ENCODE measurements at regions of chr14 and their contacts with region 1.

Region 1: DNA sequence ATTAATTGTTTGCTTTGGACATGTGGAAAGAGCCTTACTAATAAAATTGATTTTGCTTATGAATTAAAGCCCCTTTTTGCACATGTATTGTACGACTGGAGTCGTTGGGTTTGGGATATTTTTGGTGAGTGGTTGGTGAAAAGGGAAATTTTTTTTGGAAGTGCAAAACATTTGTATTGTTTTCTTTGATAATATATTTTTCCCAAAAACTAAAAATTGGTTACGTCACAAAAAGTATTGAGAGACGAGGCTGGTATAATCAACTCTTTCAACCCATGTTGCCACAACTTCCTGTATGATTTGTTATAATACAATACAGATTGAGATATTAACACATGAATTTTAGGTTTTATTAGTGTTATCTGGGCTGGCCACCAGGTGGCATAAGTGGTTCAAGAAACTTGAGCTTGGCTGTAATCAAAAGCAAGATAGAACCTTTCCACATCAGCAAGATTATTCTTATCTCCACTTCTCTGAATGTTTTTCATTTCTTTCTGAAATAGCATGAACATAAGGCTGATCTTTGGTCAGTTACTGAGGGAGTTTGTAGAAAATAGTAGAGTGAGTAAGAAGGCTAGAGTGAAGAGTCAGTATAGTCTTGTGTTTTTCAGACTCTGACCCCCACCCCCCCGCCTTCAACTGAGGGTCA is 8.7 kb downstream of the NGDN start:
- DNase-seq: peak; percentile 25
- ATAC-seq: peak; percentile 62
- H3K4me3 Mint-ChIP-seq: no peak overlapping the region
- H3K27ac Mint-ChIP-seq: no peak overlapping the region
- H3K4me1 Mint-ChIP-seq: peaks cover 2% of the 10 kb centered on the region
- H3K27me3 Mint-ChIP-seq: no peaks in the 10 kb centered on the region
- CTCF ChIP-seq: no peak

Region 2: DNA sequence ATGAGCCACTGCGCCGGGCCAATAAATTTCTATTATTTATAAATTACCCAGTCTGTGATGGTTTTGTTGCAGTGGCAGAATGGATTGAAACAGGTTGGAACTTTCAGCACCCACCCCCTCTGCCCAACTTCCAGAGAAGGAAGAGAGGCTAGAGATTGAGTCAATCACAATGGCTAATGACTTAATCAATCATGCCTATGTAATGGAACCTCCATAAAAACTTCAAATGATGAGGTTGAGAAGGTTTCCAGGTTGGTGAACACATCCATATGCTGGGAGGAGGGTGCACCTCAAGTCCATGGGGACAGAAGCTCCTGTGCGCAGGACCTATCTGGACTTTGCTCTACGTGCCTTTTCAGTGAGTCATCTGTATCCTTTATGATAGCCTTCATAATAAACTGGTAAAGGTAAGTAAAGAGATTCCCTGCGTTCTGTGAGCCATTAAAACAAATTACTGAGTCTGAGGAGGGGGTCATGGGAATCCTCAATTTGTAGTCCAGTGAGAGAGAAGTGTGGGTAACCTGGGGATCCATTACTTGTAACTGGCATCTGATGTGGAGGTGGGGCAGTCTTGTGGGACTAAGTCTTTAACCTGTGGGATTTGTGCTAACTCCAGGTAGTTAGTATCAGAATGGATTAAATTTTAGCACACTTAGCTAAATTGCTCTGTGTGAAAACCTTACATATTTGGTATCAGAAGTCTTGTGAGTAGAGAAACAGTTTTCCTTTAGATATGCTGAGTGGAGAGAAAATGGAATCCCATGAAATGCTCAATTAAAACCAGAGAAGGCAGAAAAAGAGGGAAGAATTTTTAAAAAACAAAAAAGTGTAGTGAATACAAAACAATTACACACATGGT is 20.4 kb before region 1 on chr14:
- CTCF ChIA-PET with region 1: no interaction called
- POLR2A ChIA-PET with region 1: no interaction called
- intact Hi-C with region 1: no loop called
- DNase-seq: no peak
- ATAC-seq: no peak
- H3K4me3 Mint-ChIP-seq: no peak overlapping the region
- H3K27ac Mint-ChIP-seq: no peak overlapping the region
- H3K4me1 Mint-ChIP-seq: no peaks in the 10 kb centered on the region
- H3K27me3 Mint-ChIP-seq: peaks cover 41% of the 10 kb centered on the region
- CTCF ChIP-seq: no peak

Region 3: GRCh38 chr14:23539248-23540140 is 61.3 kb after region 1 on chr14:
- CTCF ChIA-PET with region 1: interaction called, 4 read pairs
- POLR2A ChIA-PET with region 1: no interaction called
- intact Hi-C with region 1: loop called (anchors 1 kb)
- DNase-seq: no peak
- ATAC-seq: peak; percentile 76
- H3K4me3 Mint-ChIP-seq: no peak overlapping the region
- H3K27ac Mint-ChIP-seq: no peak overlapping the region
- H3K4me1 Mint-ChIP-seq: no peaks in the 10 kb centered on the region
- H3K27me3 Mint-ChIP-seq: peaks cover 2% of the 10 kb centered on the region
- CTCF ChIP-seq: peak; percentile 29

Measured in activated B cell treated with CpG ODN at 0.5 μM for 24 hours (primary cell).